ENCODE measurements at regions of chr10 and their contacts with region 1.

Region 1: DNA sequence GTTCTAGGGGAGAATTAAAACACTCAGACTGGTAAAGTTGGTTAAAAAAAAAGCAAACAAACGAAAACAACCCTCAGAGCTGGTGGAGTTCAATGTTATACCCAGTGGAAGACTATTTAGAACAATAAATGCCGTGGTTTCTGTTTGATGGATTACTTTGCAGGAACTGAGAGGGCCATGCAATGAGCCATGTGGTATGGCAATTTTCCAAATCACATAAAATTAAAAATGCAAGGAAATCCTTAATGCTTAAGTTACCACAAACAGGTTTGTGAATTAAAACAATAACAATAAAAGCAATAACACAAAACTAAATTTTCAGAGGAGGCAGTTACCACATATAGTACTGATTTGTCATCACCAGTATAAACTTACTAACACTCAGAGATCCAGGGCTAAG is 96.9 kb downstream of the RTKN2 start:
- DNase-seq: no peak
- ATAC-seq: no peak
- H3K4me3 ChIP-seq: no peak overlapping the region
- H3K4me3 Mint-ChIP-seq: no peak overlapping the region
- H3K27ac ChIP-seq: no peak overlapping the region
- H3K27ac Mint-ChIP-seq: no peak overlapping the region
- H3K4me1 ChIP-seq: peaks cover 0 to 5% of the 10 kb centered on the region in 2 donors
- H3K4me1 Mint-ChIP-seq: peaks cover 11 to 32% (median 26%) of the 10 kb centered on the region in 7 donors
- H3K27me3 ChIP-seq: no peaks in the 10 kb centered on the region
- H3K27me3 Mint-ChIP-seq: no peaks in the 10 kb centered on the region

Region 2: DNA sequence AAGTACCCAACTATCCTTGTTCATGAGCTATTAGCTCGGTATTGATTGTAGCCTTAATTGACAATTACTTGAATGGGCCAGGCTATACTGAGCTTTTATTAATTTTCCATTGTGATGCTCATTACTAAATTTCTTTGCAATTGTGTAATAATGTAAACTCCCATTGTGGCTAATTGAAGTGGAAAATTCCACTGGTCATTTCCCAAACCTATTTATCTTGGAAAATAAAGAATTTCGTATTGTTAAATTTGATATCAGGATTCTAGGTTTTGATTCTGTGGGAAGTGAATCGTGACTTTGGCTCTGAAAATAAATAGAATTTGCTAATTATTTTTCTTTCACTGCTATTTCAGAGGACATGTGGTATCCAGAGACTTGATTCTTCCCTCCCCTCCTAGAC is 14.2 kb before region 1 on chr10:
- CTCF ChIA-PET with region 1: no interaction called
- POLR2A ChIA-PET with region 1: interaction called, 3 read pairs
- intact Hi-C with region 1: loop called in 1 of 2 experiments (anchors 2 kb)
- DNase-seq: no peak
- ATAC-seq: no peak
- H3K4me3 ChIP-seq: no peak overlapping the region
- H3K4me3 Mint-ChIP-seq: no peak overlapping the region
- H3K27ac ChIP-seq: no peak overlapping the region
- H3K27ac Mint-ChIP-seq: peak overlapping the region in 1 of 9 donors; percentile 18
- H3K4me1 ChIP-seq: peaks cover 0 to 4% of the 10 kb centered on the region in 2 donors
- H3K4me1 Mint-ChIP-seq: peaks cover 5 to 33% (median 25%) of the 10 kb centered on the region in 7 donors
- H3K27me3 ChIP-seq: no peaks in the 10 kb centered on the region
- H3K27me3 Mint-ChIP-seq: no peaks in the 10 kb centered on the region